Caco-2 (cell line): ENCODE measurements at regions of chr5 and their contacts with region 1.

Region 1: DNA sequence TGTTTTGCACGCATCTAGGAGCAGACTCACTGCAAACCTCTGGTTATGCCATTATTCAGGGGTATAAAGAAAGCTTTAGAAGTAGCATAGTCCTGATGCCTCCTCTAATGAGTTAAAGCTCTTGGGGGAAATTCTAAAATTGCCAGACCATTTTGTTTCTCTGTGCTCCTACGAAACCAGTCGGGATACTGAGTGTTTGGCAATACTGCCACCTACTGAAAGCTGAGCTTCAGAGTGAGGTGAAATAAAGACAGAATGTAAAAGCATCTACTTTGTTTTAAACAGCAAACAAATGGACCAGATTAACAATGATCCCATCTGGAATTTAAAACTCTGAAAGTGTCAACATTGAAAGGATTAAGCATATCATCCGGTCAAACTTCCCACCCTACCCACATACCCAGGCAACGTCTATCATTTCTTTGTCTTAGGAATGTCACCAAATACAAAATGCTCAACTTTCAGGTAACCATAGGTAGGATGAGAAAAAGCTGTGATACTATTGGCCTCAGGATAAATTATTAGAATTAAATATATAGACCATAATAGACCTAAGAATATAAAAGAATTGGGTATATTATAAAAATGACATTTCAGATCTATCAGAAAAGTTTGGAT is 77.8 kb upstream of the SHISAL2B start:
- DNase-seq: peak in 1 of 2 experiments; percentile 62
- H3K4me3 ChIP-seq: no peak overlapping the region
- H3K4me3 Mint-ChIP-seq: no peak overlapping the region
- H3K27ac Mint-ChIP-seq: no peak overlapping the region
- H3K4me1 ChIP-seq: no peaks in the 10 kb centered on the region
- H3K4me1 Mint-ChIP-seq: no peaks in the 10 kb centered on the region
- H3K27me3 ChIP-seq: no peaks in the 10 kb centered on the region
- H3K27me3 Mint-ChIP-seq: peaks cover 4% of the 10 kb centered on the region
- CTCF ChIP-seq: peak; percentile 71 to 76

Region 2: GRCh38 chr5:64074533-64074932 is 537.9 kb before region 1 on chr5:
- CTCF ChIA-PET with region 1: no interaction called
- POLR2A ChIA-PET with region 1: no interaction called
- intact Hi-C with region 1: loop called (anchors 1 kb)
- DNase-seq: peak in 1 of 2 experiments; percentile 52
- H3K4me3 ChIP-seq: no peak overlapping the region
- H3K4me3 Mint-ChIP-seq: no peak overlapping the region
- H3K27ac Mint-ChIP-seq: no peak overlapping the region
- H3K4me1 ChIP-seq: no peaks in the 10 kb centered on the region
- H3K4me1 Mint-ChIP-seq: no peaks in the 10 kb centered on the region
- H3K27me3 ChIP-seq: no peaks in the 10 kb centered on the region
- H3K27me3 Mint-ChIP-seq: no peaks in the 10 kb centered on the region
- CTCF ChIP-seq: peak; percentile 46 to 70

Region 3: GRCh38 chr5:64147849-64148441 is 464.5 kb before region 1 on chr5:
- CTCF ChIA-PET with region 1: no interaction called
- POLR2A ChIA-PET with region 1: no interaction called
- intact Hi-C with region 1: loop called (anchors 1 kb)
- DNase-seq: peak; percentile 46 to 56
- H3K4me3 ChIP-seq: no peak overlapping the region
- H3K4me3 Mint-ChIP-seq: no peak overlapping the region
- H3K27ac Mint-ChIP-seq: no peak overlapping the region
- H3K4me1 ChIP-seq: no peaks in the 10 kb centered on the region
- H3K4me1 Mint-ChIP-seq: no peaks in the 10 kb centered on the region
- H3K27me3 ChIP-seq: no peaks in the 10 kb centered on the region
- H3K27me3 Mint-ChIP-seq: no peaks in the 10 kb centered on the region
- CTCF ChIP-seq: peak; percentile 81 to 85

Region 4: GRCh38 chr5:64210866-64211265 is 401.6 kb before region 1 on chr5:
- CTCF ChIA-PET with region 1: no interaction called
- POLR2A ChIA-PET with region 1: no interaction called
- intact Hi-C with region 1: no loop called
- DNase-seq: no peak
- H3K4me3 ChIP-seq: no peak overlapping the region
- H3K4me3 Mint-ChIP-seq: no peak overlapping the region
- H3K27ac Mint-ChIP-seq: no peak overlapping the region
- H3K4me1 ChIP-seq: no peaks in the 10 kb centered on the region
- H3K4me1 Mint-ChIP-seq: no peaks in the 10 kb centered on the region
- H3K27me3 ChIP-seq: no peaks in the 10 kb centered on the region
- H3K27me3 Mint-ChIP-seq: peaks cover 2% of the 10 kb centered on the region
- CTCF ChIP-seq: no peak

Region 5: DNA sequence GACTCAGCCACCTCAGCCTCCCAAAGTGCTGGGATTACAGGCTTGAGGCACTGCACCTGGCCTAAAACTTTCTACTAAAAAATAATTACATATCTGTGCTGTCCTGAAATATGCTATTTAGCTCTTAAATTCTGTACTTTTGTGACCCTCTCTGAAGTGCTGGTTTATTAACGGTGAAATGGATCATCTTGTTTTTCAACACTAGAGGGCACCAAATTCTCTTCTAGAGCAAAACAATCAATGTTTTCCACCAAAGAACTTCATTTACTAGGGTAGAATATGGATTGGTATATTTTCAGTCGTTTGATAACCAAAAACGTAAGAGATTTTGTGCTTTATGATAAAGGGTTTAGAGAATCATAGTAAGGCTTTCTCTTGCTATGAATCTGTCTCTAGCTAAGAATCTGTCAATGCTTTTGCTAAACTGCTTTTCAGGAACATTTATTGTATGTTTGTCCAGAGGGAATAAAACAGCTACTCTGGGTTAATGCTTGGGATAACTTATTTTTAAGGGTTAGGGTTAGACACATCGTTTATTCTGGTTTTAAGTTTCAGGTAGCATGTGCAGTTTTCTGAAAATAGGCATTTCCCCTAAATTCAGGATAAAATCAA is 383.2 kb before region 1 on chr5:
- CTCF ChIA-PET with region 1: interaction called, 8 read pairs
- POLR2A ChIA-PET with region 1: no interaction called
- intact Hi-C with region 1: loop called (anchors 1 kb)
- DNase-seq: peak in 1 of 2 experiments; percentile 26
- H3K4me3 ChIP-seq: no peak overlapping the region
- H3K4me3 Mint-ChIP-seq: no peak overlapping the region
- H3K27ac Mint-ChIP-seq: no peak overlapping the region
- H3K4me1 ChIP-seq: no peaks in the 10 kb centered on the region
- H3K4me1 Mint-ChIP-seq: no peaks in the 10 kb centered on the region
- H3K27me3 ChIP-seq: no peaks in the 10 kb centered on the region
- H3K27me3 Mint-ChIP-seq: no peaks in the 10 kb centered on the region
- CTCF ChIP-seq: peak; percentile 38 to 54

Region 6: DNA sequence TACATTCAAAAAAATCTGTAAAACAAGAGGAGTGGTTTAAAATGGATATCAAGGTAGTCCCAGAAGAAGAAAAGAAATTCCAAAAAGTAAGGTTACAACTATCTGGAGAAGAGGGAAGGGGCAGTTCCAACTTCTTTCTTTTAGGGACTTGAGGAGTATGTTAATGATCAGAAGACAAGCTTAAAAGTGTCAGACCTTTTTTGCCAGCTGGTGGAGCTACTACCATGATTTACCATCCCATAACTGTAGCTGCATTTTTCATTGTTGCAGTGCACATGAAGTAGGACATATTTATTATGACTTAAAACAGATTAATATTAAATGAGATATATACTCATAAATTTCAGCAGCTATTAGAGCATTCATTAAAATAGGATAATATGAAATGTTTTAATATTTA is 265.1 kb before region 1 on chr5:
- CTCF ChIA-PET with region 1: interaction called, 8 read pairs
- POLR2A ChIA-PET with region 1: no interaction called
- intact Hi-C with region 1: loop called (anchors 5 kb)
- DNase-seq: no peak
- H3K4me3 ChIP-seq: no peak overlapping the region
- H3K4me3 Mint-ChIP-seq: no peak overlapping the region
- H3K27ac Mint-ChIP-seq: no peak overlapping the region
- H3K4me1 ChIP-seq: no peaks in the 10 kb centered on the region
- H3K4me1 Mint-ChIP-seq: no peaks in the 10 kb centered on the region
- H3K27me3 ChIP-seq: no peaks in the 10 kb centered on the region
- H3K27me3 Mint-ChIP-seq: no peaks in the 10 kb centered on the region
- CTCF ChIP-seq: peak in 1 of 2 experiments; percentile 8

Region 7: GRCh38 chr5:64384761-64385160 is 227.7 kb before region 1 on chr5:
- CTCF ChIA-PET with region 1: interaction called, 3 read pairs
- POLR2A ChIA-PET with region 1: no interaction called
- intact Hi-C with region 1: loop called (anchors 1 kb)
- DNase-seq: peak; percentile 37 to 46
- H3K4me3 ChIP-seq: no peak overlapping the region
- H3K4me3 Mint-ChIP-seq: no peak overlapping the region
- H3K27ac Mint-ChIP-seq: no peak overlapping the region
- H3K4me1 ChIP-seq: no peaks in the 10 kb centered on the region
- H3K4me1 Mint-ChIP-seq: no peaks in the 10 kb centered on the region
- H3K27me3 ChIP-seq: no peaks in the 10 kb centered on the region
- H3K27me3 Mint-ChIP-seq: peaks cover 4% of the 10 kb centered on the region
- CTCF ChIP-seq: peak; percentile 44 to 73

Region 8: GRCh38 chr5:64599226-64599625 is 13.2 kb before region 1 on chr5:
- CTCF ChIA-PET with region 1: interaction called, 6 read pairs
- POLR2A ChIA-PET with region 1: no interaction called
- intact Hi-C with region 1: loop called (anchors 2 kb)
- DNase-seq: no peak
- H3K4me3 ChIP-seq: no peak overlapping the region
- H3K4me3 Mint-ChIP-seq: no peak overlapping the region
- H3K27ac Mint-ChIP-seq: no peak overlapping the region
- H3K4me1 ChIP-seq: no peaks in the 10 kb centered on the region
- H3K4me1 Mint-ChIP-seq: no peaks in the 10 kb centered on the region
- H3K27me3 ChIP-seq: no peaks in the 10 kb centered on the region
- H3K27me3 Mint-ChIP-seq: no peaks in the 10 kb centered on the region
- CTCF ChIP-seq: no peak